Caco-2 (cell line): ENCODE measurements at regions of chr15 and their contacts with region 1.

Region 1: GRCh38 chr15:95304151-95304946 is 1026.2 kb upstream of the NR2F2 start:
- DNase-seq: no peak
- H3K4me3 ChIP-seq: no peak overlapping the region
- H3K4me3 Mint-ChIP-seq: no peak overlapping the region
- H3K27ac Mint-ChIP-seq: no peak overlapping the region
- H3K4me1 ChIP-seq: no peaks in the 10 kb centered on the region
- H3K4me1 Mint-ChIP-seq: no peaks in the 10 kb centered on the region
- H3K27me3 ChIP-seq: no peaks in the 10 kb centered on the region
- H3K27me3 Mint-ChIP-seq: no peaks in the 10 kb centered on the region
- CTCF ChIP-seq: no peak

Region 2: DNA sequence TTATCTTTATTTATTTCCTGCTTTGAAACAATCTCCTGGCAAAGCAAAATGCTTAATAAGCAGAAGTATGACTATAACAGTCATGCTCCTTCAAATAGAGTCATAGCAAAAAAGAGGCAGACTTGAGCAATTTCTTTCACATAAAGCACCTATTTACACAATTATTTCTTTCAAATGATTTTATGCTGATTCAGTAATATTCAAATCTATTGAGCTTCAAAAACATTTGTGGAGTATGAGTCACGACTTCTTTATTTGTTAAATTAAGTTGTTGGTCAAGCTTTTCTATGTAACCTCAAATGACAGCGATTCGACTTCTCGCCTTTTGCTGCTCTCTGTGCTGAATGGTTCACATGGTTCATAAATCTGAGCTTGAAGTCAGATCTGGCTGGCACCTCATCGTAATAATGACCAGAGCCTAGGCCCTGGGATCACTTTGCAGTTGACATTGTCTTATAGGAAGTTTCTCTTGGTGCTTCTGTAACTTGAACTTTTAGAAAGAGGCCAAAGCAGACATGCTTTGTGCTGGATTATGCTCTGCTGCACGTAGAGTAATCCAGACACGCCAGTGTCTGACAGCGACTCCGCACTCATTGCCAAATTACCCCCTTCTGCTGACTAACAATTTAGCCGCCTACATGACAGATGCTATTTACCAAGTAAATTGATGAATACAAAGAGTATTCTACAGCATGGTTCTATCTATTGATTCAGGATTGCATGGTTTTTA is 934.0 kb before region 1 on chr15:
- CTCF ChIA-PET with region 1: no interaction called
- POLR2A ChIA-PET with region 1: no interaction called
- intact Hi-C with region 1: loop called (anchors 5 kb)
- DNase-seq: no peak
- H3K4me3 ChIP-seq: no peak overlapping the region
- H3K4me3 Mint-ChIP-seq: no peak overlapping the region
- H3K27ac Mint-ChIP-seq: no peak overlapping the region
- H3K4me1 ChIP-seq: no peaks in the 10 kb centered on the region
- H3K4me1 Mint-ChIP-seq: no peaks in the 10 kb centered on the region
- H3K27me3 ChIP-seq: no peaks in the 10 kb centered on the region
- H3K27me3 Mint-ChIP-seq: no peaks in the 10 kb centered on the region
- CTCF ChIP-seq: no peak

Region 3: DNA sequence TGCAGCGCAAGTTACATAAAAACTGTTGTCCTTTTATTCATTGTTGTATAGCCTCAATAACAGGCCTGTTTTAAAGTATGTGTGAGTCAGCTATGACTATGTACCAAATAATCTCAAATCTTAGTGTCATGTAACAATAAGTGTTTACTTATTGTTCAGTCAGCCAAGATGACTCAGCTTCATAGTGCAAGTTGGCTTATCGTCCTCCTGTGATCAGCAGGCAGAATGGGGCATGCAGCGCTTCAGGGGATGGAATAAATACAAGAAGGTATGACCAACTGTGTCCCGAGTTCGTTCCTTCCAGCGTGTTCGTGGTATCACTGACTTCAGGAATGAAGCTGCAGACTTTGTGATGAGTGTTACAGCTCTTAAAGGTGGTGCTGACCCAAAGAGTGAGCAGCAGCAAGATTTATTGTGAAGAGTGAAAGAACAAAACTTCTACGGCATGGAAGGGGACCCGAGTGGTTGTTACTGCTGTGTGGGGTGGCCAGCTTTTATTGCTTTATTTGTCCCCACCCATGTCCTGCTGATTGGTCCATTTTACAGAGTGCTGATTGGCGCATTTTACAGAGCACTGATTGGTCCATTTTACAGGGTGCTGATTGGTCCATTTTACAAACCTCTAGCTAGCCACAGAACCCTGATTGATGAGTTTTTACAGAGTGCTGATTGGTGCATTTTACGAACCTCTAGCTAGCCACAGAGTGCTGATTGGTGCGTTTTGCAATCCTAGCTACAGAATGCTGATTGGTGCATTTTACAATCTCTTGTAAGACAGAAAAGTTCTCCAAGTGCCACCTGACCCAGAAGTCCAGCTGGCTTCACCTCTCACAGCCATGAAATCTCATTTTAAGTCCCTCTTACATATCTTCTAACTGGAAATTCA is 57.0 kb before region 1 on chr15:
- CTCF ChIA-PET with region 1: no interaction called
- POLR2A ChIA-PET with region 1: no interaction called
- intact Hi-C with region 1: no loop called
- DNase-seq: no peak
- H3K4me3 ChIP-seq: no peak overlapping the region
- H3K4me3 Mint-ChIP-seq: no peak overlapping the region
- H3K27ac Mint-ChIP-seq: no peak overlapping the region
- H3K4me1 ChIP-seq: no peaks in the 10 kb centered on the region
- H3K4me1 Mint-ChIP-seq: no peaks in the 10 kb centered on the region
- H3K27me3 ChIP-seq: no peaks in the 10 kb centered on the region
- H3K27me3 Mint-ChIP-seq: no peaks in the 10 kb centered on the region
- CTCF ChIP-seq: no peak

Region 4: GRCh38 chr15:96435022-96435421 is 1130.7 kb after region 1 on chr15:
- CTCF ChIA-PET with region 1: no interaction called
- POLR2A ChIA-PET with region 1: no interaction called
- intact Hi-C with region 1: loop called (anchors 5 kb)
- DNase-seq: no peak
- H3K4me3 ChIP-seq: no peak overlapping the region
- H3K4me3 Mint-ChIP-seq: no peak overlapping the region
- H3K27ac Mint-ChIP-seq: no peak overlapping the region
- H3K4me1 ChIP-seq: no peaks in the 10 kb centered on the region
- H3K4me1 Mint-ChIP-seq: no peaks in the 10 kb centered on the region
- H3K27me3 ChIP-seq: no peaks in the 10 kb centered on the region
- H3K27me3 Mint-ChIP-seq: peaks cover 3% of the 10 kb centered on the region
- CTCF ChIP-seq: no peak